ENCODE measurements at regions of chr3 and their contacts with region 1.

Region 1: DNA sequence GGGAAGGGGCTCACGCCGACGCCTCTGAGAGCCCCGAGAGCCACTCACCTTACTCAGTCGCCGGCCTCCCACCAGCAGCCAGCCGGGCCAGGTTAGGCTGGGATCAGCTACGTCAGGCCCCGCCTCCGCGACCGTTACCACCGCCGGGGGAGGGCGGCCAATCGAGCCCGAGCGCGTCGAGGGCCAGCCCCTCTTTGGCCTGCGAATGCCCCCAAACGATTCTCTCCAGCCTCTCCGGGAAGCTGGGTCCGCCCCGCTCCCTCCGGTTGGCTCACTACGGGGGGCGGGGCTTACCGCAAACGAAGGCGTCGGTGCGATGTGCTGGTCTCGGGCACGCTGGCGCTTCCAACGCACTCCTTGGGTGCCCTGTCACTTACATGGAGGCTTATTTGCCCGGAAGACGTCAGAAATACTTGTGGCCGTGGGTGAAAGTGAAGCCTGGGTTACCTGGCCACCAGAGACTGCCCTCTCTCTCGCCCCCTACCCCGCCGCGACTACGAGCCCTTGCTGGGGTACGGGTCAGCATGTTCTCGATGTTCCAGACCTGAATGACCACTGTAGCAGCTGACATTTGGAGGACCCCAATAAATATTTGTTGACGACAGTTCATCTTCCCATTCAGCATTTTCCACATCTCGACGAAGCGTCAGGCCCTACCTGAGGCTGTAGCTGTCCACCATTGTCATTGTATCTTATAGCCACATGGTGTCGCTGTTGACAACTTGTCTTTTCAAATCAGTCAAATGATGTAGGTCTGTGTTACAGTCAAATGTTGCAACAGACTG is at the start of gene CEP70:
- DNase-seq: peak; percentile 95
- total RNA-seq, gene CEP70: 22.0 TPM

Region 2: GRCh38 chr3:138347960-138348753 is 246.2 kb before region 1 on chr3 and contains the start of gene MRAS:
- intact Hi-C with region 1: loop called (anchors 5 kb)
- DNase-seq: peak; percentile 90
- total RNA-seq, gene MRAS: 327 TPM

Region 3: DNA sequence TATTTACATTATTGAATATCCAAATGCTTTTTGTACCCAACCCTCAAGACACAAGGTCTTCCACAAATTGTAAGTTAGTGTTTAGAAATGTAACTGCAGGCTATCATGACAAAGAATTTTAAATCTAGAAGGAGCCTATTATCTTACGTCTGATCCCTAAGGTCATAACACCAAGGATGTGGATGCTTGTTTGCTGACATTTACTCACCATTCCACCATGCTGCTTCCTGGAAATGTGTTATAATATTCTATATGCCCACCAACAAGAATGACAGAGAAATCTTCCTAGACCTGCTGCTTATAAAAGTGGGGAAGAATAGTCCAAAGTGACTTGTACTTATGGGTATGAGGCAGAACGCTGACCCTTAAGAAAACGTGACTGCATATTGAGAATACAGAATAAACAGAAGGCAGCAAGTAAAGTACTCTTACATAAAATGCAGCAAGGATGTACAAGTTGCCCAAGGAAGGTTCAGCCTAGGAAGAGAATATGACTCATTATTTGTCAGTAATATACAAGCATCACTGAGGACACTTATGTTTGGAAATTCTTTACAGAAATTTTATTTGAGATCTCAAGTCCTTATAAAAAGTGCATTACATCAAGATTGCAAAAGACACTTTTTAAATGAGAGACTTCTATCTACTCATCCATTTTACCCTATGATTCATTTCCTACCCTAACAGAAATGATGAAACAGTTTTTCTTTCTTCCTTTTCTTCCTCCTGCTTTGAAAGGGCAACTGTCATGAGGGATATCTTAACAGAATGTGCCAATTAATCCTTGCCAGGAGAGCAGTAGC is 100.3 kb before region 1 on chr3:
- intact Hi-C with region 1: loop called (anchors 5 kb)
- DNase-seq: no peak

Region 4: GRCh38 chr3:138834359-138835212 is 240.2 kb after region 1 on chr3 and contains the start of gene PIK3CB:
- intact Hi-C with region 1: loop called (anchors 10 kb)
- DNase-seq: peak; percentile 93
- total RNA-seq, gene PIK3CB: 26.1 TPM